ENCODE measurements at regions of chr16 and their contacts with region 1.

Region 1: GRCh38 chr16:212999-213398 is 16.2 kb downstream of the LUC7L start:
- DNase-seq: no peak
- H3K4me3 ChIP-seq: no peak overlapping the region
- H3K27ac ChIP-seq: no peak overlapping the region
- H3K4me1 ChIP-seq: no peaks in the 10 kb centered on the region
- H3K27me3 ChIP-seq: no peaks in the 10 kb centered on the region

Region 2: GRCh38 chr16:228818-229730 is 16.1 kb after region 1 on chr16 and contains the start of gene LUC7L:
- CTCF ChIA-PET with region 1: interaction called, 11 read pairs
- POLR2A ChIA-PET with region 1: no interaction called
- DNase-seq: peak; percentile 87 to 92 (median 90)
- H3K4me3 ChIP-seq: peak within 1 kb of the TSS; percentile 60 to 99 (median 89)
- H3K27ac ChIP-seq: peak within 1 kb of the TSS; percentile 78 to 93
- H3K4me1 ChIP-seq: peaks cover 11 to 20% (median 18%) of the 10 kb centered on the region in 4 experiments
- H3K27me3 ChIP-seq: no peaks in the 10 kb centered on the region

Region 3: GRCh38 chr16:456891-457483 is 244.0 kb after region 1 on chr16:
- CTCF ChIA-PET with region 1: no interaction called
- POLR2A ChIA-PET with region 1: no interaction called
- DNase-seq: no peak
- H3K4me3 ChIP-seq: no peak overlapping the region
- H3K27ac ChIP-seq: peak overlapping the region; percentile 43 to 59
- H3K4me1 ChIP-seq: peaks cover 0 to 8% (median under 1%) of the 10 kb centered on the region in 4 experiments
- H3K27me3 ChIP-seq: no peaks in the 10 kb centered on the region

Region 4: GRCh38 chr16:468068-468821 is 255.2 kb after region 1 on chr16:
- CTCF ChIA-PET with region 1: no interaction called
- POLR2A ChIA-PET with region 1: no interaction called
- DNase-seq: peak in 2 of 3 donors; percentile 34 to 40
- H3K4me3 ChIP-seq: no peak overlapping the region
- H3K27ac ChIP-seq: no peak overlapping the region
- H3K4me1 ChIP-seq: no peaks in the 10 kb centered on the region
- H3K27me3 ChIP-seq: no peaks in the 10 kb centered on the region

Measured in common myeloid progenitor, CD34-positive (primary cell).